Caco-2 (cell line): ENCODE measurements at regions of chr22 and their contacts with region 1.

Region 1: GRCh38 chr22:24525416-24526037 is 29.4 kb downstream of the GUCD1 start:
- DNase-seq: peak; percentile 83 to 88
- H3K4me3 ChIP-seq: no peak overlapping the region
- H3K4me3 Mint-ChIP-seq: no peak overlapping the region
- H3K27ac Mint-ChIP-seq: no peak overlapping the region
- H3K4me1 ChIP-seq: peaks cover 20% of the 10 kb centered on the region
- H3K4me1 Mint-ChIP-seq: peaks cover 26% of the 10 kb centered on the region
- H3K27me3 ChIP-seq: no peaks in the 10 kb centered on the region
- H3K27me3 Mint-ChIP-seq: no peaks in the 10 kb centered on the region
- CTCF ChIP-seq: peak; percentile 88 to 92

Region 2: GRCh38 chr22:24325105-24325757 is 200.3 kb before region 1 on chr22:
- CTCF ChIA-PET with region 1: no interaction called
- POLR2A ChIA-PET with region 1: no interaction called
- intact Hi-C with region 1: loop called (anchors 1 kb)
- DNase-seq: peak in 1 of 2 experiments; percentile 32
- H3K4me3 ChIP-seq: no peak overlapping the region
- H3K4me3 Mint-ChIP-seq: no peak overlapping the region
- H3K27ac Mint-ChIP-seq: no peak overlapping the region
- H3K4me1 ChIP-seq: no peaks in the 10 kb centered on the region
- H3K4me1 Mint-ChIP-seq: no peaks in the 10 kb centered on the region
- H3K27me3 ChIP-seq: no peaks in the 10 kb centered on the region
- H3K27me3 Mint-ChIP-seq: no peaks in the 10 kb centered on the region
- CTCF ChIP-seq: peak; percentile 35 to 63

Region 3: GRCh38 chr22:24423519-24424000 is 102.0 kb before region 1 on chr22:
- CTCF ChIA-PET with region 1: interaction called, 51 read pairs
- POLR2A ChIA-PET with region 1: no interaction called
- intact Hi-C with region 1: loop called (anchors 1 kb)
- DNase-seq: peak in 1 of 2 experiments; percentile 81
- H3K4me3 ChIP-seq: peak overlapping the region; percentile 68
- H3K4me3 Mint-ChIP-seq: peak overlapping the region; percentile 62
- H3K27ac Mint-ChIP-seq: no peak overlapping the region
- H3K4me1 ChIP-seq: peaks cover 13% of the 10 kb centered on the region
- H3K4me1 Mint-ChIP-seq: peaks cover 18% of the 10 kb centered on the region
- H3K27me3 ChIP-seq: no peaks in the 10 kb centered on the region
- H3K27me3 Mint-ChIP-seq: no peaks in the 10 kb centered on the region
- CTCF ChIP-seq: peak; percentile 51 to 93

Region 4: GRCh38 chr22:24486501-24486921 is 39.0 kb before region 1 on chr22:
- CTCF ChIA-PET with region 1: interaction called, 3 read pairs
- POLR2A ChIA-PET with region 1: no interaction called
- intact Hi-C with region 1: loop called (anchors 5 kb)
- DNase-seq: no peak
- H3K4me3 ChIP-seq: no peak overlapping the region
- H3K4me3 Mint-ChIP-seq: no peak overlapping the region
- H3K27ac Mint-ChIP-seq: peak overlapping the region; percentile 1
- H3K4me1 ChIP-seq: peaks cover 45% of the 10 kb centered on the region
- H3K4me1 Mint-ChIP-seq: peaks cover 50% of the 10 kb centered on the region
- H3K27me3 ChIP-seq: no peaks in the 10 kb centered on the region
- H3K27me3 Mint-ChIP-seq: no peaks in the 10 kb centered on the region
- CTCF ChIP-seq: no peak

Region 5: DNA sequence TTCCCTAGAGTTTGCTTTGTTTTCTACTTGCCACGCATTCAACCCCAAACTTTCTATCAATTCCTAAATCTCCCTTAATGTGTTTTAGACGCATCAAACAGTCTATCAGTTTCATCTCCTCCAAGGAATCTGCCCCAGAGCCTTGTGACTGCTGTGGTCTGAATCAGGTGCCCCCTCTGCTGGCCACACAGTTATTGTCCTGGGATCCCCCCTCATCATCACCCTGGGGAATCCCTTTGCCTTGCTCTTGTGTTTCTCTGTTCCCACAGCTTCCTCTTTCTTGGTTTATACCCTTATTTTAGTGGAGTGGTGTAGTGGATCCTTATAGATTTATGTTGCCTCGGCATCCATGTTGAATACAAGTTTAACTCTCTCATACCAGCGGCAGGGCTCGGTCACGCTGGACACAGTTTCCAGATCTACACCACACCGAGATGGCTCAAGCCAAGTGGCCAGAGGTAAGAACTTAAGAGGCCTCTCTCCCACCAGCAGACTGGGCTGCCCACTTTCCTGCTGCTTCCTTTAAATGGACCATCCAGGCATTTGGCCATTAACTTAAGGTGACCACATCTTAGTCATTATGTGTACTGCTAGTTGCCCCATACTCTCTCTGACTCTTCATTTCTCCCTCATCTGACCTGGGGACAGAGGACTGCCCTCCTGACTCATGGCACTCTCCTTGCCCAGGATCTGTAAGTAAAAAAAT is 22.2 kb before region 1 on chr22:
- CTCF ChIA-PET with region 1: interaction called, 21 read pairs
- POLR2A ChIA-PET with region 1: interaction called, 4 read pairs
- intact Hi-C with region 1: loop called (anchors 2 kb)
- DNase-seq: peak; percentile 65 to 74
- H3K4me3 ChIP-seq: no peak overlapping the region
- H3K4me3 Mint-ChIP-seq: peak overlapping the region; percentile 29
- H3K27ac Mint-ChIP-seq: peak overlapping the region; percentile 80
- H3K4me1 ChIP-seq: peaks cover 94% of the 10 kb centered on the region
- H3K4me1 Mint-ChIP-seq: peaks cover 65% of the 10 kb centered on the region
- H3K27me3 ChIP-seq: no peaks in the 10 kb centered on the region
- H3K27me3 Mint-ChIP-seq: no peaks in the 10 kb centered on the region
- CTCF ChIP-seq: peak; percentile 70 to 76

Region 6: GRCh38 chr22:24510637-24511625 is 14.6 kb before region 1 on chr22:
- CTCF ChIA-PET with region 1: interaction called, 21 read pairs
- POLR2A ChIA-PET with region 1: interaction called, 9 read pairs
- intact Hi-C with region 1: loop called (anchors 2 kb)
- DNase-seq: peak; percentile 66 to 89
- H3K4me3 ChIP-seq: no peak overlapping the region
- H3K4me3 Mint-ChIP-seq: peak overlapping the region; percentile 35
- H3K27ac Mint-ChIP-seq: peak overlapping the region; percentile 86
- H3K4me1 ChIP-seq: peaks cover 92% of the 10 kb centered on the region
- H3K4me1 Mint-ChIP-seq: peaks cover 62% of the 10 kb centered on the region
- H3K27me3 ChIP-seq: no peaks in the 10 kb centered on the region
- H3K27me3 Mint-ChIP-seq: no peaks in the 10 kb centered on the region
- CTCF ChIP-seq: no peak

Region 7: GRCh38 chr22:24555157-24556039 is 29.9 kb after region 1 on chr22 and contains the start of gene SNRPD3:
- CTCF ChIA-PET with region 1: no interaction called
- POLR2A ChIA-PET with region 1: interaction called, 8 read pairs
- intact Hi-C with region 1: loop called (anchors 2 kb)
- DNase-seq: peak; percentile 97 to 99
- H3K4me3 ChIP-seq: peak within 1 kb of the TSS; percentile 86
- H3K4me3 Mint-ChIP-seq: peak within 1 kb of the TSS; percentile 100
- H3K27ac Mint-ChIP-seq: peak within 1 kb of the TSS; percentile 99
- H3K4me1 ChIP-seq: peaks cover 41% of the 10 kb centered on the region
- H3K4me1 Mint-ChIP-seq: peaks cover 46% of the 10 kb centered on the region
- H3K27me3 ChIP-seq: no peaks in the 10 kb centered on the region
- H3K27me3 Mint-ChIP-seq: no peaks in the 10 kb centered on the region
- CTCF ChIP-seq: peak; percentile 19 to 30
- total RNA-seq, gene SNRPD3: 202 and 217 TPM in 2 replicates